ENCODE measurements at regions of chr20 and their contacts with region 1.

Region 1: GRCh38 chr20:23441850-23442313 is 2.4 kb downstream of the CSTL1 start:
- DNase-seq: peak; percentile 68 to 89
- H3K4me3 ChIP-seq: no peak overlapping the region
- H3K27ac ChIP-seq: no peak overlapping the region
- H3K4me1 ChIP-seq: peaks cover 0 to 2% (median 0%) of the 10 kb centered on the region in 4 donors
- H3K27me3 ChIP-seq: no peaks in the 10 kb centered on the region
- CTCF ChIP-seq: peak in 5 of 7 experiments; percentile 58 to 83 (median 81)
- EP300 ChIP-seq: no peak
- POLR2A ChIP-seq: no peak

Region 2: GRCh38 chr20:23320317-23320716 is 121.6 kb before region 1 on chr20:
- intact Hi-C with region 1: no loop called
- DNase-seq: no peak
- H3K4me3 ChIP-seq: no peak overlapping the region
- H3K27ac ChIP-seq: peak overlapping the region in 3 of 5 donors; percentile 12 to 51 (median 24)
- H3K4me1 ChIP-seq: peaks cover 0 to 4% (median 0%) of the 10 kb centered on the region in 4 donors
- H3K27me3 ChIP-seq: no peaks in the 10 kb centered on the region
- CTCF ChIP-seq: peak in 2 of 7 experiments; percentile 26 to 41
- EP300 ChIP-seq: no peak
- POLR2A ChIP-seq: no peak

Region 3: GRCh38 chr20:23606652-23607049 is 164.8 kb after region 1 on chr20:
- intact Hi-C with region 1: loop called (anchors 10 kb)
- DNase-seq: peak; percentile 78 to 89
- H3K4me3 ChIP-seq: no peak overlapping the region
- H3K27ac ChIP-seq: no peak overlapping the region
- H3K4me1 ChIP-seq: peaks cover 0 to 10% (median 8%) of the 10 kb centered on the region in 4 donors
- H3K27me3 ChIP-seq: no peaks in the 10 kb centered on the region
- CTCF ChIP-seq: peak in 5 of 7 experiments; percentile 72 to 94 (median 88)
- EP300 ChIP-seq: no peak
- POLR2A ChIP-seq: no peak